ENCODE measurements at regions of chr16 and their contacts with region 1.

Region 1: DNA sequence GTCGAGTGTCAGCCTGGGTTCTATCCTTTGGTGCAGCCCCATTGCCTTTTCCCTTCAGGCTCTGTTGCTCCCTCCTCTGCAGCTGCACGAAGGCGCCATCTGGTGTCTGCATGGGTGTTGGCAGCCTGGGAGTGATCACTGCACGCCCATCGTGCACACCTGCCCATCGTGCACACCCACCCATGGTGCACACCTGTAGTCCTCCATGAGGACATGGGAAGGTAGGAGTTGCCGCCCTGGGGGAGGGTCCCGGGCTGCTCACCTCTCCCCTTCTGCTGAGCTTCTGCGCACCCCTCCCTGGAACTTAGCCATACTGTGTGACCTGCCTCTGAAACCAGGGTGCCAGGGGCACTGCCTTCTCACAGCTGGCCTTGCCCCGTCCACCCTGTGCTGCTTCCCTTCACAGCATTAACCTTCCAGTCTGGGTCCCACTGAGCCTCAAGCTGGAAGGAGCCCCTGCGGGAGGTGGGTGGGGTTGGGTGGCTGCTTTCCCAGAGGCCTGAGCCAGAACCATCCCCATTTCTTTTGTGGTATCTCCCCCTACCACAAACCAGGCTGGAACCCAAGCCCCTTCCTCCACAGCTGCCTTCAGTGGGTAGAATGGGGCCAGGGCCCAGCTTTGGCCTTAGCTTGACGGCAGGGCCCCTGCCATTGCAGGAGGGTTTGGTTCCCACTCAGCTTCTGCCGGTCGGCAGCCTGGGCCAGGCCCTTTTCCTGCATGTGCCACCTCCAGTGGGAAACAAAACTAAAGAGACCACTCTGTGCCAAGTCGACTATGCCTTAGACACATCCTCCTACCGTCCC is 2.9 kb downstream of the CTRL start:
- DNase-seq: peak; percentile 79 to 84 (median 83)
- ATAC-seq: peak; percentile 87
- H3K4me3 ChIP-seq: no peak overlapping the region
- H3K4me1 ChIP-seq: no peaks in the 10 kb centered on the region
- CTCF ChIP-seq: peak; percentile 63

Region 2: DNA sequence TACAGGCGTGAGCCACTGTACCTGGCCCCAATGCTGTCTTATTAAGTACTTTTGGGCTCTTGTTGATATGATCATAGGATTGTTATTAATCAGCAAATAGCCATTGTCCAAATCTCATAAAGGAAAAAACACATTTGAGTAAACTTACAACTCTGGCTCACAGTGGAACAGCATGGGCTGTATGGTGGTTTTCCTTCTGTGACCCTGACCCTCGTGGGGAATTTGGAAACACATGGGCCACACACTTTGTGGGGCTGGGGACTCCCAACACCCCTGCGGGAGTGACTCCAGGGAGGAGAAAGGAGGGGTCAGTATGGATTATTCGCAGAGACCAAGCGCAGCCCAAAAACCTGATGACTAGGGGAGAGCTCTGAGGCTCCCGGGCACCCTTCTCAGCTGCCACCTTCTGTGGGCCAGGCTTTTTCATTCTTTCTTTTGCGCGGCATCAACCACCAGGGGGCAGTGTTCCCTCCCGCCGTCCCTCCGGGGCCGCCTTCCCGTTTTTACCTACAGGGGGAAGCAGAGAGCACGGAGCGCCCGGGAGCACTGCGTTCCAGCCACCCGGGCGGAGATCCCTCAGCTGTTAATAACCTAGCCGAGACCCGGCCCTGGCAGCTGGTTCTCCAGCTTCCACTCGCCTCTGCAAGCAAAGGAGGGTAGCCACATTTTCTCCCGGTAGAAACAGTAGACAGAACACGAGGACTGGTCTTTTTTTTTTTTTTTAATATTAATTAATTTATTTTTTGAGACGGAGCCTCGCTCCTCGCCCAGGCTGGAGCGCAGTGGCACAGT is 112.3 kb before region 1 on chr16:
- intact Hi-C with region 1: loop called in 1 of 2 experiments (anchors 10 kb)
- DNase-seq: peak; percentile 87 to 92 (median 90)
- ATAC-seq: peak; percentile 98
- H3K4me3 ChIP-seq: no peak overlapping the region
- H3K4me1 ChIP-seq: peaks cover 3% of the 10 kb centered on the region
- CTCF ChIP-seq: peak; percentile 100